GM23248 (cell line): ENCODE measurements at regions of chr3 and their contacts with region 1.

Region 1: DNA sequence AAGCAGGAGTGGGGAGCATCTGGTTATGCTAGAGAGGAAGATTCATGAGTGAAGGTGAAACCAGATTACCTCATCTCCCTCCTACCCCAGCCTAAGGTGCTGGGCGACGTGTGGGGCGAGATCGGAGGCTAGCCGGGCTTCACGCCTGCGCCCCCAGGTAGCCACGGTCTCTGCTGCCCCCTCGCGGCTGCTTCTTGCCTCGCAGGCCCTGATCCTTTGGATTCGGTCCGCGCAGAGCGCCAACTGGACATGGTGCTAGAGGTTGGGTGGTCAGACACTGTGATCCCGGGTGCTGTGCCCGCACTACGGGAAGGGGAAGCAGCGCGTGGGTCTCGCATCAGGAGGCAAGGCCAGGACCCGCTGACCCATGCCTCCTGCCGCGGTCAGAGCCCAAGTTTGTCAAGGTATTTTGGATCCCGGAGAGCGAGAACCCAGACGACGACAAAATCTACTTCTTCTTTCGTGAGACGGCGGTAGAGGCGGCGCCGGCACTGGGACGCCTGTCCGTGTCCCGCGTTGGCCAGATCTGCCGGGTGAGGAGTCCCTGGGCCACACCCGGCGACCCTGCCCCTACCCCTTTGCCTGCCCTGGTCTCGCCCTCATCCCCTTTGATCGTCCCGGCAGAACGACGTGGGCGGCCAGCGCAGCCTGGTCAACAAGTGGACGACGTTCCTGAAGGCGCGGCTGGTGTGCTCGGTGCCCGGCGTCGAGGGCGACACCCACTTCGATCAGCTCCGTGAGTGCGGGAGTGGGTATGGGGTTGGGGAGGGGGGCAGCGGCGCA is 4.2 kb downstream of the SEMA3B start:
- DNase-seq: peak; percentile 81
- H3K4me3 ChIP-seq: peak overlapping the region; percentile 50
- H3K27ac ChIP-seq: no peak overlapping the region
- H3K4me1 ChIP-seq: peaks cover 18% of the 10 kb centered on the region
- H3K27me3 ChIP-seq: no peaks in the 10 kb centered on the region

Region 2: GRCh38 chr3:50194903-50195500 is 78.1 kb before region 1 on chr3:
- in situ Hi-C with region 1: loop called (anchors 5 kb)
- DNase-seq: peak; percentile 56
- H3K4me3 ChIP-seq: peak overlapping the region; percentile 16; the same call in 1 of the 2 replicates
- H3K27ac ChIP-seq: no peak overlapping the region
- H3K4me1 ChIP-seq: no peaks in the 10 kb centered on the region
- H3K27me3 ChIP-seq: peaks cover 43% of the 10 kb centered on the region

Region 3: DNA sequence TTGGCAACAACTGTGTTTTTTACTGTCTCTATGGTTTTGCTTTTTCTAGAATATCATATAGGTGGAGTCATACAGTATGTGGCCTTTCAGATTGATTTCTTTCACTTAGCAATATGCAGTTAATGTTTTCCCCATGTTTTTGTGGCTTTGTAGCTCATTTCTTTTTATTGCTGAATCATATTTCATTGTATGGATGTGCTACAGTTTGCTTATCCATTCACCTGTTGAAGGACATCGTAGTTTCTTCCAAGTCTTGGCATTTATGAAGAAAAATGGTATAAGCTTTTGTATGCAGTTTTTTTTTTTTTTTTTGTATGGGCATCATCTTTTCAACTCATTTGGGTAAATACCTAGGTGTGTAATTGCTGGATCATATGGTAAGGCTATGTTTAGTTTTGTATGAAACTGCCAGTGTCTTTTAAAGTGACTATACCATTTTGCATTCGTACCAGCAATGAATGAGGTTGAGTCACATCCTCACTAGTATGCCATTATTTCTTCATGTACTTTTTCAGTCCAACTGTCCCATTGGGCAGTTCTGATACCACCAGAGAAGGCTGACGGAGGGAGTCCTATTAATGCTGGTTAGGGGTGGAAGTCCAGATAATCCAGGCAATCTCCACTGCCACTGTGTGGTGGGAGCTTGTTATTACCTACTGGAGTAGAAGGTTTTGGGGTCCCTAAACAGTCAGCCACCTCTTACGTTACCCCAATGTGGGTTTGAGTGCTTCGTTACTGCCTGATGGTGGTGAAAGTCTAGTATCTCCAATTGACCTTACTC is 612.2 kb after region 1 on chr3:
- in situ Hi-C with region 1: no loop called
- DNase-seq: peak; percentile 27
- H3K4me3 ChIP-seq: no peak overlapping the region
- H3K27ac ChIP-seq: no peak overlapping the region
- H3K4me1 ChIP-seq: no peaks in the 10 kb centered on the region
- H3K27me3 ChIP-seq: no peaks in the 10 kb centered on the region